ENCODE measurements at regions of chr9 and their contacts with region 1.

Region 1: GRCh38 chr9:121645853-121646807 is 5.3 kb upstream of the DAB2IP start:
- DNase-seq: peak in 1 of 2 donors; percentile 62
- ATAC-seq: peak; percentile 30 to 77 (median 64)
- H3K4me3 ChIP-seq: no peak overlapping the region
- H3K27ac ChIP-seq: peak overlapping the region; percentile 20 to 85 (median 70)
- H3K4me1 ChIP-seq: peaks cover 21 to 83% (median 46%) of the 10 kb centered on the region in 9 donors
- H3K27me3 ChIP-seq: peaks cover 0 to 18% (median 0%) of the 10 kb centered on the region in 7 donors
- CTCF ChIP-seq: no peak

Region 2: DNA sequence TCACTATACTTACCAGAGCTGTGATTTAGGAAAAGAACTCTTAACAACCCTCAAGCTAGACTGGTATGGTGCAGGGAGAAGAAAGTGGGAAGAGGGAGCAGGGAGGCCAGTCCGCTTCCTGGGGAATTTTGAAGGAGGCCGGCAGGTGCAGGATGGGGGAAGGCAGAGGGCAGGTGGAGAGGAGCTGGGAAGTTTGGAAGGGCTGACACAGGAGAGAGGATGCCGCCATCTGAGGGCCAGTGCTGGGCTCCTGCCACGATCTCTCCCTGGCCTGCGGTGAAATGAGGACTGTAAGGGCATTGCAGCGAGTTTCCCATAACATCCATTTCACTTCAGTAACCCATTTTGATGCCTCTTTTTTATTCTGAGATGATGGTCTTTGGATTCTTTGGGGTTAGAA is 14.2 kb after region 1 on chr9:
- intact Hi-C with region 1: loop called in 1 of 10 experiments (anchors 1 kb)
- DNase-seq: no peak
- ATAC-seq: no peak
- H3K4me3 ChIP-seq: no peak overlapping the region
- H3K27ac ChIP-seq: peak overlapping the region in 5 of 10 donors; percentile 25 to 96 (median 88)
- H3K4me1 ChIP-seq: peaks cover 36 to 95% (median 72%) of the 10 kb centered on the region in 9 donors
- H3K27me3 ChIP-seq: no peaks in the 10 kb centered on the region
- CTCF ChIP-seq: no peak

Region 3: GRCh38 chr9:121698627-121699570 is 52.8 kb after region 1 on chr9:
- intact Hi-C with region 1: no loop called
- DNase-seq: peak; percentile 74 to 78
- ATAC-seq: peak; percentile 9 to 78 (median 40)
- H3K4me3 ChIP-seq: peak overlapping the region; percentile 44 to 70 (median 57)
- H3K27ac ChIP-seq: peak overlapping the region; percentile 25 to 89 (median 80)
- H3K4me1 ChIP-seq: peaks cover 26 to 66% (median 43%) of the 10 kb centered on the region in 9 donors
- H3K27me3 ChIP-seq: peaks cover 0 to 54% (median 0%) of the 10 kb centered on the region in 7 donors
- CTCF ChIP-seq: no peak

Measured in heart right ventricle (tissue), 16 donors.